ENCODE measurements at regions of chr16 and their contacts with region 1.

Region 1: GRCh38 chr16:11530171-11530940 is 56.4 kb downstream of the LITAF start:
- DNase-seq: no peak
- ATAC-seq: no peak
- H3K4me3 Mint-ChIP-seq: no peak overlapping the region
- H3K27ac Mint-ChIP-seq: no peak overlapping the region
- H3K4me1 Mint-ChIP-seq: peaks cover 4% of the 10 kb centered on the region
- H3K27me3 Mint-ChIP-seq: peaks cover 14% of the 10 kb centered on the region

Region 2: DNA sequence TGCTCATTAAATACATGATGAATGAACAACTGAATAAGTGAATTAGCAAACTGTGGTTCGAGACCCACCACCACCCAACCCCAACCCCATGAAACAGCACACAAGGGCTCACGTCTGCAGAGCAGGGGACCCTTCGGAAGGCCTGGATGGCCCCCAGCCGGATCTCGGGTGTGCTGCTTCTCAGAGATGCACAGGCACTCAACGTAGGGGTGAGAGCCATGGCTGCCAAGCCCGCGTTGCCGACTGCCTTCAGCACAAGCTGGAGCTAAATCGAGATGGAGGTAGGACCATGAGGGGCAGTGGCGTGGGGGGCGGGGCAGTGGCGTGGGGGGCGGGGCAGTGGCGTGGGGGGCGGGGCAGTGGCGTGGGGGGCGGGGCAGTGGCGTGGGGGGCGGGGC is 36.8 kb before region 1 on chr16:
- CTCF ChIA-PET with region 1: no interaction called
- DNase-seq: no peak
- ATAC-seq: no peak
- H3K4me3 Mint-ChIP-seq: no peak overlapping the region
- H3K27ac Mint-ChIP-seq: no peak overlapping the region
- H3K4me1 Mint-ChIP-seq: peaks cover 18% of the 10 kb centered on the region
- H3K27me3 Mint-ChIP-seq: no peaks in the 10 kb centered on the region

Region 3: GRCh38 chr16:11586856-11587642 is 56.7 kb after region 1 on chr16 and contains the start of gene LITAF:
- CTCF ChIA-PET with region 1: interaction called, 30 read pairs
- DNase-seq: peak; percentile 75
- ATAC-seq: peak; percentile 78
- H3K4me3 Mint-ChIP-seq: peak within 1 kb of the TSS; percentile 89
- H3K27ac Mint-ChIP-seq: peak within 1 kb of the TSS; percentile 90
- H3K4me1 Mint-ChIP-seq: peaks cover 41% of the 10 kb centered on the region
- H3K27me3 Mint-ChIP-seq: peaks cover 3% of the 10 kb centered on the region
- total RNA-seq, gene LITAF: 91.4 to 155 TPM

Region 4: GRCh38 chr16:11619327-11619851 is 89.0 kb after region 1 on chr16:
- CTCF ChIA-PET with region 1: interaction called, 30 read pairs
- DNase-seq: peak; percentile 85
- ATAC-seq: peak; percentile 66
- H3K4me3 Mint-ChIP-seq: peak overlapping the region; percentile 39
- H3K27ac Mint-ChIP-seq: peak overlapping the region; percentile 91
- H3K4me1 Mint-ChIP-seq: peaks cover 51% of the 10 kb centered on the region
- H3K27me3 Mint-ChIP-seq: no peaks in the 10 kb centered on the region

Region 5: DNA sequence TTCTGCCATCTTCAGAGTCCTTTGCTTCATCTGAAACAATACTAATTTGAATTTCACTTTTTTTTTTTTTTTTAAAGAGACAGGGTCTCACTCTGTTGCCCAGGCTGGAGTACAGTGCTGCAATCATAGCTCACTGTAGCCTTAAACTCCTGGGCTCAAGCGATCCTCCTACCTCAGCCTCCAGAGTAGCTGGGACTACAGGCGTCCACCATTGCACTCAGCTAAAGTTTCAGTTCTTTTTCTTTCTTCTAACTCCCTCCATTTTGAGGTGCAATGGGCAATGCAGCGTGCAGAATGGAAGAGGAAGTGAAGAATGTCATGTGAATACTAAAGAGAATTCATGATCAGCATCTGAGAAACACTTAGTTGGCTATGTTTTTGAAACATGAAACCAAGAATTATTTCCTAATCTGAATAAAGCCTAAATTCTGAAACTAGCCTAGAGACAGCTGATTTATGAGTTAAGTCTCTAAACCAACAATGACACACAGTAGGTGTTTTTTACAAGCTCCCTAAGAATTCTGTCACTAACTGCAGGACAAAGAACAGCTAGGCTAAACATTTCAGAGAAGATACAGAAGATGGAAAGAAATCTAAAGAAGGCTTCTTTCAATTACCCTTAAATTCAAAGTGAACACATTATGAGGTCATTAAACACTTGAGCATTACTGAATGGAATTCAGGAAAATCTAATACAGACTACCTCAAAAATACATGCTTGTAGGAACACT is 158.8 kb after region 1 on chr16:
- CTCF ChIA-PET with region 1: interaction called, 12 read pairs
- DNase-seq: no peak
- ATAC-seq: no peak
- H3K4me3 Mint-ChIP-seq: no peak overlapping the region
- H3K27ac Mint-ChIP-seq: no peak overlapping the region
- H3K4me1 Mint-ChIP-seq: peaks cover 15% of the 10 kb centered on the region
- H3K27me3 Mint-ChIP-seq: no peaks in the 10 kb centered on the region

Region 6: DNA sequence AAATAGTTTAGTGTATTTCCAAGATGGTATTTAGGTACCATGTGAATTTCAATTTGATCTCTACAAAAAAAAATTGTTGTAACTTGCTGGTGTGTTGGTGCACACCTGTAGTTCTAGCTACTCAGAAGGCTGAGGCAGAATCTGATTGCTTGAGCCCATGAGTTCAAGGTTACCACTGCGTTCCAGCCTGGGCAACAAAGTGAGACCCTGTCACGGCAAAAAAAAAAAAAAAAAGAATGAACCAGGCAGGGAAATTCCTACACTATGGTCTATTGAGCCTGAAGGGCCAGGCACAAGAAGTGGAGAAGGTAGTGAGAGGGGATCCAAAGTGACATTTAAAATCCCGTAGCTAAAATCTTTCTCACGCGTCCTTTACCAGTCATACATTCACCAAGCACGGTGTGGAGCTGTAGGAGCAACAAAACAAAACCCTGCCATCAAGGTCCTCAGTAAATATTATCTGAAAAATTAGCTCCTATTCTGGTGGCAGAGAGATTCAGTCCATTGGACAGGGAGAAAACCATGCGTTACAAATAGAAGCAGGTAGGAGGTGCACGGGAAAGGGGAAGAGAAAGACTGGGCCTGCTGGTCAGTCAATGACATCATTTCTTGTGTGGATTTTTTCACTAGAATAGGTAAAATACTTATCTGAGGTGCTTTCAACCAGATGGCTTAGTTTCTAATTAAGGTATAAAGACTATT is 185.0 kb after region 1 on chr16:
- CTCF ChIA-PET with region 1: interaction called, 62 read pairs
- DNase-seq: no peak
- ATAC-seq: no peak
- H3K4me3 Mint-ChIP-seq: no peak overlapping the region
- H3K27ac Mint-ChIP-seq: no peak overlapping the region
- H3K4me1 Mint-ChIP-seq: peaks cover 16% of the 10 kb centered on the region
- H3K27me3 Mint-ChIP-seq: no peaks in the 10 kb centered on the region

Region 7: DNA sequence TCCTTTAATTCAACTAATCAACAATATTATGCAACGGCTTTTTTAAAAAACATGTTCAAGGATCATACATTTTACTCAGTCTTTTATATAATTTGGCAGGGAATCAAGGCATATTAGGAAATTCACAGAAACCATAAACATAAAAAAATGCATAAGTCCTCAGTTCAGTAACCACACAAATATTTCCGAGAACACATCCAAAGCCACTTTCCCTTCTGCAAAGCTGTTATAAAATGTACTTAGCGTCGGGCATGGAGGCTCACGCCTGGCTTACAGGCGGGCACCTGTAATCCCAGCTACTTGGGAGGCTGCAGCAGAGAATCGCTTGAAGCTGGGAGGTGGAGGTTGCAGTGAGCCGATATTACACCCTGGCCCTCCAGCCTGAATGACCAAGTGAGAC is 276.4 kb after region 1 on chr16:
- CTCF ChIA-PET with region 1: no interaction called
- DNase-seq: no peak
- ATAC-seq: no peak
- H3K4me3 Mint-ChIP-seq: no peak overlapping the region
- H3K27ac Mint-ChIP-seq: no peak overlapping the region
- H3K4me1 Mint-ChIP-seq: peaks cover 9% of the 10 kb centered on the region
- H3K27me3 Mint-ChIP-seq: peaks cover 8% of the 10 kb centered on the region